ENCODE measurements at regions of chr16 and their contacts with region 1.

Region 1: GRCh38 chr16:3099732-3100499 is 822 bp upstream of the ZSCAN10 start:
- DNase-seq: peak; percentile 86 to 96
- H3K4me3 ChIP-seq: peak overlapping the region; percentile 67 to 96 (median 88)
- H3K27ac ChIP-seq: peak overlapping the region; percentile 93
- H3K4me1 ChIP-seq: peaks cover 14 to 30% (median 16%) of the 10 kb centered on the region in 4 experiments
- H3K27me3 ChIP-seq: no peaks in the 10 kb centered on the region
- CTCF ChIP-seq: no peak
- EP300 ChIP-seq: no peak
- POLR2A ChIP-seq: peak; percentile 84 to 87
- RAD21 ChIP-seq: no peak

Region 2: DNA sequence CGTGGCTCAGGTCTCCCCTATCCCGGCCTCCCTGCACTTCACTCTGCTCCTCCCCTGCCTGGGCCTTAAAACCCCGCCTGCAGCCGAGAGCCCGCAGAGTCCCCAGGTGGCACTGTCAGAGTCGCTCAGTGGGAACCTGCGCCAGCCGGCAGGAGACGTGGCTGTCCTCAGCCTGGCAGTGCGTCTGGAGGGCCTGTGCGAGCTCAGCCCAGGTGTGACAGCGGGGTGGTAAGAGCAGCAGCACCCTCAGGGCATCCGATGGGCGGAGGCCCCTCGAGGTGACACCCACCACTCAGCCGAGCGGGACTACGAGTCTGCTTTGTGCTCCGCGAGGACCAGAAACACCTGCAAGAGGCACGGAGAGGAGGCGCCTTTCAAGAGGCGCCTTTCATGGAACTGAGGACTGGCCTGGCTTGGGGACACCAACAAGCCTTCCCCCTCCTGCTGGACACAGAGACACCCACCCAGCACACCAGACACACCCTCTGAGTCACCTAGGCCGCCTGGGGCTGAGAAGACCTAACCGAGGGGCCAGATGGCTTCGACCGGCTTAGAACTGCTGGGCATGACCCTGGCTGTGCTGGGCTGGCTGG is 87.0 kb before region 1 on chr16 and contains the start of gene CLDN9:
- CTCF ChIA-PET with region 1: interaction called, 6 read pairs
- POLR2A ChIA-PET with region 1: interaction called, 26 read pairs
- DNase-seq: peak in 1 of 2 experiments; percentile 82
- H3K4me3 ChIP-seq: peak within 1 kb of the TSS; percentile 32 to 58 (median 46)
- H3K27ac ChIP-seq: no peak within 1 kb of the TSS
- H3K4me1 ChIP-seq: peaks cover 14 to 63% (median 50%) of the 10 kb centered on the region in 4 experiments
- H3K27me3 ChIP-seq: no peaks in the 10 kb centered on the region; a peak in 1 of 7 replicates
- CTCF ChIP-seq: no peak
- EP300 ChIP-seq: no peak
- POLR2A ChIP-seq: no peak
- RAD21 ChIP-seq: no peak
- total RNA-seq, gene CLDN9: 0.60 and 0.77 TPM in 2 replicates

Region 3: DNA sequence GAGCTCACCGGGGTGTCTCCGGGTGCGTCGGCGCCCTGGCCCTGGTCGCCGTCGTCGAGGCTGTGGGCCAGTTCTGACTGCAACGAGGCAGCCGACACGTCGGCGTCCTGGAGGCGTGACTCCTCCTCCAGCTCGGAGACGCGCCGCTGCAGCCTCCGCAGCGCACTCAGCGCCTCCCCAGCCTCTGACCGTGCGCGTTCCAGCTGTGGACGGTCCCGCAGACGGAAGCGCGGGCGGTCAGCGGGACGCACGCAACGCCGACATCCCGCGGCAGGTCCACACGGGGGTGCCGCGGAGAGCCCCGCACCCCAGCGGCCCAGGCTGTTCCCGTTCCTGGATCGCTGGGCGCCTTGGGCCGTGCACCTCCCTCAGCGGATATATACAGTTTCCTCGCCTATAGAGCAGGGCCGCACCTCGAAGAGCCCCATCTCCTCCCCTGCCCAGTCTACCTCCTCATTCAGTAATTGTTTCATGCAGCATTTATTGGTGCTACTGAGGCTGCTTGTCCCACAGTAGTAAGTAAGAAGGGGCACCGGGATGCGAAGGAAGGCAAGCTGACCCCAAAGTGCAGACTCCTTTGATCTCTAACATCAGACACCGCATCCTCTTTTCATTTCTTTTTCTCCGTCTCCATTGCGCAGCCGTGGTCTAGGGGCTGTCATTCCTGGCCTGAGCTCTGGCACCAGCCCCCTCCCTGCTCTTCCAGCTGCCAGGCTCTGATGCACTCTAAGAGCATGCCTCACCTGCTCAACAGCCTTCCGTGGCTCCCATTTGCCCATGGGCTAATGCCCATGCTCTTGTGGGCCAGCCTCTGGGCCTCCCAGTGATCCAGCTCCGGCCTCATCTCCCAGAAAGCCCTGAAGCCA is 70.1 kb before region 1 on chr16:
- CTCF ChIA-PET with region 1: interaction called, 15 read pairs
- POLR2A ChIA-PET with region 1: interaction called, 76 read pairs
- DNase-seq: peak in 1 of 2 experiments; percentile 41
- H3K4me3 ChIP-seq: no peak overlapping the region
- H3K27ac ChIP-seq: no peak overlapping the region
- H3K4me1 ChIP-seq: peaks cover 0 to 8% (median 6%) of the 10 kb centered on the region in 4 experiments; a peak in 5 of 7 replicates
- H3K27me3 ChIP-seq: no peaks in the 10 kb centered on the region
- CTCF ChIP-seq: no peak
- EP300 ChIP-seq: no peak
- POLR2A ChIP-seq: no peak
- RAD21 ChIP-seq: no peak

Region 4: DNA sequence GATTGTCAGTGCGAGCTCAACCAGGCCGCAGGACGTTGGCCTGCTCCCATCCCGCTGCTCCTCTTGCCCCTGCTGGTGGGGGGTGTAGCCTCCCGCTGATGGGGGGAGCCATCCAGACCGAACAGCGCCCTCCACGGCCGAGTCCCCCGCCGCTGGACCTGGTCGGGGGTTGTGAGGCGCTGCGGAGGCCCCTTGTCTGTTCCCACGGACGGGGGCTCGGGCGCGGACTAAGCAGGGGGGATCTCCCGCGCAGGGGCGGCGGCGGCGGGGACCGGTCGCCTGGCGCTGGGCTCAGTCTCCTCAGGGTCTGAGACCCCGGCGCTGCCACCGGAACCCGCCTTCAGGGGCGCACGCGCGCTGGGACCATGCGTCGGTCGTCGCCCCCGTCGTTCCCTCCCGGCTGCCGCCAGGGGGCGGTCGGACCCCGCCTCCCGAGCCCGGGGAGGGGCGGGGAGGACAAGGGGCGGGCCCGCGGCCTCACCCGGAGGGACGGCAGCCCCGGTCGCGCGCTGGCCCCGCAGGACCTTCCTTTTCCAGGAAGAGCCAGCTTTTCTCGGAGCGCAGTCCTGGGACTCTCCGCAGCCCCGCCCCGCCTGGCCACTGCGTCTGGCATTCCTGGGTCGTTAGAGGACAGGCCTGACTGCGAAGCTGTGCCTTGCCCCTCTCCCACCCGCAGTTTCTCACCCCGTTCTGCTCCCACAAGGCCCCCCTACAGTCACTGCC is 40.8 kb before region 1 on chr16:
- CTCF ChIA-PET with region 1: interaction called, 35 read pairs
- POLR2A ChIA-PET with region 1: interaction called, 140 read pairs
- DNase-seq: peak; percentile 64 to 96
- H3K4me3 ChIP-seq: peak overlapping the region; percentile 39 to 86 (median 67)
- H3K27ac ChIP-seq: no peak overlapping the region
- H3K4me1 ChIP-seq: peaks cover 5 to 19% (median 6%) of the 10 kb centered on the region in 4 experiments; a peak in 6 of 7 replicates
- H3K27me3 ChIP-seq: no peaks in the 10 kb centered on the region; a peak in 1 of 7 replicates
- CTCF ChIP-seq: peak; percentile 79 to 99 (median 88)
- EP300 ChIP-seq: 0 out of 3 replicates have a peak, but pooled peaks of 1 of the 2 experiments have one; percentile 53
- POLR2A ChIP-seq: peak in 1 of 2 experiments; percentile 39; a peak in 1 of 3 replicates
- RAD21 ChIP-seq: peak; percentile 81 to 95

Region 5: DNA sequence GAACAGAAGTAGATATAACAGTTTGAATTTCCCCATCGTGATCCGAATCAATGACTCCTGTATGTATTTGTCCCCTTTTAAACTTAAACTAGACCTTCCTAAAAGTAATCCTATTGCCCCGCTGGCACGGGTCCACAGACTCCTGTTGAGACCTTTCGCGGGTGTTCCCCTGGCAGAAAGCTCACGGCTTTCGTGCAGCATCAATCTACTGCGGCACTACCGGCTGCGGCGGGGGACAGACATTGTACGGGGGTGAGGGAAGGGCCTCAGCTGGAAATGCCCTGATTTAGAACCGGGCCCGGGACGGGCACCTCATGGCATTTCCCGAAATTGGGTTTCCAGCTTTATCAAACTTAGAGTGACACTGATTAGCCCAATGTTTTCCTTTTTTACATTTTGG is 19.9 kb before region 1 on chr16:
- CTCF ChIA-PET with region 1: interaction called, 13 read pairs
- POLR2A ChIA-PET with region 1: interaction called, 47 read pairs
- DNase-seq: no peak
- H3K4me3 ChIP-seq: no peak overlapping the region
- H3K27ac ChIP-seq: no peak overlapping the region
- H3K4me1 ChIP-seq: no peaks in the 10 kb centered on the region; a peak in 2 of 7 replicates
- H3K27me3 ChIP-seq: no peaks in the 10 kb centered on the region
- CTCF ChIP-seq: no peak
- EP300 ChIP-seq: no peak
- POLR2A ChIP-seq: no peak
- RAD21 ChIP-seq: no peak

Region 6: GRCh38 chr16:3134564-3135417 is 34.9 kb after region 1 on chr16 and contains the start of gene ZNF213:
- CTCF ChIA-PET with region 1: interaction called, 619 read pairs
- POLR2A ChIA-PET with region 1: interaction called, 109 read pairs
- DNase-seq: peak; percentile 88 to 93
- H3K4me3 ChIP-seq: peak within 1 kb of the TSS; percentile 86 to 96 (median 90)
- H3K27ac ChIP-seq: peak within 1 kb of the TSS; percentile 97
- H3K4me1 ChIP-seq: peaks cover 0 to 2% (median 0%) of the 10 kb centered on the region in 4 experiments; a peak in 1 of 7 replicates
- H3K27me3 ChIP-seq: no peaks in the 10 kb centered on the region
- CTCF ChIP-seq: no peak
- EP300 ChIP-seq: no peak
- POLR2A ChIP-seq: peak in 1 of 2 experiments; percentile 92; a peak in 2 of 3 replicates
- RAD21 ChIP-seq: no peak
- total RNA-seq, gene ZNF213: 6.9 and 7.3 TPM in 2 replicates

Region 7: DNA sequence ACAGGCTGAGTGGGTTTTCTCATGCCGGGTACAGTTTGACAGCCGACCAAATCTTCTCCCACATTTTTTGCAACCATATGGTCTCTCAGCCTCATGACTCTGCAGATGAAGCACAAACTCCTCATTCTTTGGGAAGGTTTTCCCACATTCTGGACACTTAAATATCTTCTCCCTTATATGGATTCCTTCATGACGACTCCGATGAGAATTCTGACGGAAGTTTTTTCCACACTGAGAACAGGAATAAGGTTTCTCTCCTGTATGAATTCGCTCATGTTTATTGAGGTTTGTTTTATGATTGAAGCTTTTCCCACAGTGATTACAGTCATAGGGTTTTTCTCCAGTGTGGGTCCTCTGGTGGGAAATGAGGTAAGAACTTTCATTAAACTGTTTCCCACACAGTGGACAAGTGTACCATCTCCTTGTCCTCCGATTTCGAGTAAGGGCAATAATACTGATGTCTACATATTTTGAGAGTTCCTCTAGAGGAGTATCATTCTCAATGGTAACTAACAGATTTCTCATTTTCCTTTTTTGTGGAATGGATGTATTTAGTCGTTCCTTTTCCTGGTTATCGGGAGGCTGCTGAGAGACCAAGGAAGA is 124.1 kb after region 1 on chr16:
- CTCF ChIA-PET with region 1: no interaction called
- POLR2A ChIA-PET with region 1: no interaction called
- DNase-seq: no peak
- H3K4me3 ChIP-seq: 0 out of 8 replicates have a peak overlapping the region, but pooled peaks of 1 of the 4 experiments have one; percentile 1
- H3K27ac ChIP-seq: no peak overlapping the region
- H3K4me1 ChIP-seq: no peaks in the 10 kb centered on the region
- H3K27me3 ChIP-seq: peaks cover 0 to 1% (median 0%) of the 10 kb centered on the region in 4 experiments; a peak in 1 of 7 replicates
- CTCF ChIP-seq: no peak
- EP300 ChIP-seq: no peak
- POLR2A ChIP-seq: no peak
- RAD21 ChIP-seq: no peak